HCT116 (cell line): ENCODE measurements at regions of chr17 and their contacts with region 1.

Region 1: DNA sequence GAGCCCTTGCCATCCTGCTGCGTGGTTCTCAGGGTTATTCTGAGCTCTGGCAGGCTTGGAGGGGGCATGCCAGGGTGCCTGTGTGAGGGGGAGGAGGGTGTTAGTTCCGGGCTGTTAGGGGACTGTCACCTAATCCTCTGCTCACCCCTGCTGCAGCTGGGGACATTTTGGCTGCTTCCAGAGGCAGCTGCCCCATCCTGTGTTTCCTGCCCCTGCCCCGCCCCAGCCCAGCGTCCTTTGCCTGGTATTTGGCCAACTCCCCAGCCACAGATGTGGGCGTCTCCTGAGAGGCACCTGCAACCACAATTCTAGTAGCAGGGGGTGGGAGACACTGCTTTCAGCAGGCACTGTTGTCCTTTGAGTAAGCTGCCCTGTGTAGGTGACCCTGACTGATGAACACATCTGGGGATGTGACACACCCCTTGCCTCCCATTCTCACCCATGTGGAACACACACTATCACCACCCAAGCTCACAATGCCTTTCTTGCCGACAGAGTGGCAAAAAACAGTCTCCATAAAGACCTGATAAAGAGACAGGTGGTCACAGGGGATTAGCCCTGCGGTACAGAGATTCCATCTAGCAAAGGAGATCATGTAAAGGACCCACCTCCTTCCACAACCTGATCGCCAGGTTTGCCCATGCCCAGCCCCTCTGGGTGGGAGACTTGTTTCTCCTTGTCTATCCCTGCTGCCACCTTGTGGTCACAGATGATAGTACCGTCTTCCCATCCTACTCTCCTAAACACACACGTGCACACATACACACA is at the start of gene CHRNE:
- DNase-seq: peak; percentile 87
- ATAC-seq: peak; percentile 89
- H3K4me3 ChIP-seq: no peak within 1 kb of the TSS
- H3K27ac ChIP-seq: no peak within 1 kb of the TSS; the same call in 1 of the 2 replicates
- H3K4me1 ChIP-seq: peaks cover 10 to 14% of the 10 kb centered on the region in 2 experiments
- H3K27me3 ChIP-seq: no peaks in the 10 kb centered on the region
- CTCF ChIP-seq: peak; percentile 67 to 81 (median 74); a peak in 5 of 6 replicates
- POLR2A ChIP-seq: no peak
- RAD21 ChIP-seq: peak; percentile 73
- total RNA-seq, gene CHRNE: 0.30 TPM

Region 2: GRCh38 chr17:4913994-4914393 is 10.8 kb after region 1 on chr17:
- CTCF ChIA-PET with region 1: interaction called, 12 read pairs
- POLR2A ChIA-PET with region 1: no interaction called
- RAD21 ChIA-PET with region 1: interaction called in 1 of 2 experiments, 3 read pairs
- intact Hi-C with region 1: no loop called
- DNase-seq: no peak
- ATAC-seq: no peak
- H3K4me3 ChIP-seq: no peak overlapping the region
- H3K27ac ChIP-seq: no peak overlapping the region
- H3K4me1 ChIP-seq: peaks cover 5 to 14% of the 10 kb centered on the region in 2 experiments
- H3K27me3 ChIP-seq: no peaks in the 10 kb centered on the region
- CTCF ChIP-seq: no peak
- POLR2A ChIP-seq: no peak
- RAD21 ChIP-seq: no peak